K562 (cell line): ENCODE measurements at regions of chr15 and their contacts with region 1.

Region 1: GRCh38 chr15:90412356-90413194 is 24.5 kb downstream of the IQGAP1 start:
- DNase-seq: no peak
- ATAC-seq: peak; percentile 79
- H3K4me3 ChIP-seq: no peak overlapping the region
- H3K27ac ChIP-seq: no peak overlapping the region
- H3K4me1 ChIP-seq: peaks cover 0 to 23% of the 10 kb centered on the region in 2 experiments; a peak in 4 of 5 replicates
- H3K27me3 ChIP-seq: no peaks in the 10 kb centered on the region
- CTCF ChIP-seq: no peak
- EP300 ChIP-seq: no peak
- POLR2A ChIP-seq: no peak
- RAD21 ChIP-seq: no peak

Region 2: DNA sequence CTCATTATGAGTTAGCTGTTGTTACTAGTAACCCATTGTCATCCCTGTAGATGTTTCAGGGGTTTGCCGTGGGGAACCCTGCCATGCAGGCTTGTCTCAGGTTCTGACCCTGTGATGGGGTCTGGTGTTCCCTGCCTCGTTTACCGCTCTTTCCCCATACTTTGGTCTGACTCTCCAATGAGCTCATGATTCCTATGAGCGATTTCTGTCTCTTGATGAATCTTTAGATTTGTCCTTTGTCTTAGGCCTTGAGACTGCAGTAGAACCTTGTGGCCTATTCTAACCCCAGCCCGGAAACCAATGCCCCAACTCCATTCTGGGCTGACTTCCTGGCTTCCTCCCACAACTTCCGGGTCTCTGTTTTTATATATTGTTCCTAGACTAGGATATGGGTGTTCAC is 35.8 kb before region 1 on chr15:
- CTCF ChIA-PET with region 1: no interaction called
- POLR2A ChIA-PET with region 1: no interaction called
- in situ Hi-C with region 1: no loop called
- intact Hi-C with region 1: no loop called
- DNase-seq: no peak
- ATAC-seq: no peak
- H3K4me3 ChIP-seq: no peak overlapping the region
- H3K27ac ChIP-seq: no peak overlapping the region
- H3K4me1 ChIP-seq: no peaks in the 10 kb centered on the region
- H3K27me3 ChIP-seq: no peaks in the 10 kb centered on the region
- CTCF ChIP-seq: no peak
- EP300 ChIP-seq: no peak
- POLR2A ChIP-seq: no peak
- RAD21 ChIP-seq: no peak

Region 3: DNA sequence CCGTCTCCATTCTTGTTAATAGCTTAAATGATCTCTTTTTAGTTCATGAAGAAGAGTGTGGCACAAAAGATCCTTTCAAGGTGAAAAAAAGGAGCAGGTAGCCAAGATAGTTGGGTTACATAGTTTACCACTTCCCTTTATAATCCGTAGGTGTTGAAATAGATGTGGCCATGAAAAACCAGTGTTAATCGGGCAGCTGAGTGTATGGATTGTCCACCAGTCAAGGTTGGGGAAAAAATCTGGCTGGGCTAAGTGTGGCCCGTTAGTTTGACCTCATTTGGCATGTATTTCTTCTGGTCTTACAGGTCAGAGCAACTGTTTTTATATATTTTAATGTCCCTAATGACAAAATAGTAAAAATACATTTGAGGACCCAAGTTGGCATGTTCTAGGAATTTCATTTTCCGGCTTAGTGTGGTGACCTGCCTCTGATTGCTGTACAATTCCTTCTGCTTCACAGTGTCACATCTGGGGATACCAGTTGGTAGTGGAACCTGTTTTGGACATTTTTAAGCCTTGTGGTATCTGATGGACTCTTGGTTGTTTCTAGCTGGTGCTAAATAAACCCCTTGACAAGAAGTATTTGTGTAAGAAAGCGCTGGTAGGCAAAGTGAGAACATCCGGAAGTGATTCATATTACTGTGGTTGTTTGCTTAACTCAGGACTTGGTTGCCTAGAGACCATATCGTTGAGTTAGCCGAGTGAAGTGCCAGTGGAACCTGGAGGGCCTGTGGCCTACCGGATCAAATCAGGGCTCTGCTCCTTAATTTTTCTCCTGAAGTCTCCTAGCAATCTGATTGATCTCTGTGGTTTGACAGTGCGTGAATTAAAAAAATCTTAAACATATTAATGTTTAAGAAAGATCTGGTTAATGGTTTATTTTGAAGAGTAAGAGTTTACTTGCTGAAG is 11.9 kb before region 1 on chr15:
- CTCF ChIA-PET with region 1: no interaction called
- POLR2A ChIA-PET with region 1: interaction called, 19 read pairs
- in situ Hi-C with region 1: no loop called
- intact Hi-C with region 1: no loop called
- DNase-seq: peak; percentile 71 to 88 (median 79)
- ATAC-seq: peak; percentile 97
- H3K4me3 ChIP-seq: no peak overlapping the region
- H3K27ac ChIP-seq: peak overlapping the region; percentile 82
- H3K4me1 ChIP-seq: peaks cover 0 to 29% of the 10 kb centered on the region in 2 experiments; a peak in 3 of 5 replicates
- H3K27me3 ChIP-seq: no peaks in the 10 kb centered on the region
- CTCF ChIP-seq: no peak
- EP300 ChIP-seq: peak; percentile 51
- POLR2A ChIP-seq: no peak
- RAD21 ChIP-seq: no peak

Region 4: DNA sequence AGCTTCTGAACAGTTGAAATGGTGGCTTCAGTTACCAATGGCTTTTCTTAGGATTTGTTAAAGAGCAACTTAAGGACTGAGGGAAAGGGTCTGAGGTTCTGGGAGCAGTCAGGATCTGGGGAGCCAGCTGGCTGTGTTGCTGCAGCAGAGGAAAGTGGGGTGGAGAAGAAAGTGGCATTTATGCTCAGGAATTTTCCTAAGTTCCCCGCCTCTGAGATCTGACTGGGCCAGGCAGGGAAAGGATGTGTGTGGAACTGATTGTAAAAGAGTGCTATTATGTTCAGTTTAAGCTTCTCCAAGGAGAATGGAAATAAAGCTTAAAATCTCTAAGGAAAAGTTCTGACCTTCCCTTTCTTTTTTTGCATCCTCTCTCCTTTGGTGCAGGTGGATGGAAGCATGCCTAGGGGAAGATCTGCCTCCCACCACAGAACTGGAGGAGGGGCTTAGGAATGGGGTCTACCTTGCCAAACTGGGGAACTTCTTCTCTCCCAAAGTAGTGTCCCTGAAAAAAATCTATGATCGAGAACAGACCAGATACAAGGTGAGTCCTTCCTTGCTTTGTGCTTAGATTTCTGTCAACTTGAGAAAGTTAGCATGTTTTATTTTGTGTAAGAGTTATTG is 13.3 kb after region 1 on chr15:
- CTCF ChIA-PET with region 1: no interaction called
- POLR2A ChIA-PET with region 1: interaction called, 15 read pairs
- in situ Hi-C with region 1: no loop called
- intact Hi-C with region 1: no loop called
- DNase-seq: no peak
- ATAC-seq: no peak
- H3K4me3 ChIP-seq: no peak overlapping the region
- H3K27ac ChIP-seq: no peak overlapping the region
- H3K4me1 ChIP-seq: no peaks in the 10 kb centered on the region; a peak in 1 of 5 replicates
- H3K27me3 ChIP-seq: no peaks in the 10 kb centered on the region
- CTCF ChIP-seq: no peak
- EP300 ChIP-seq: no peak
- POLR2A ChIP-seq: no peak
- RAD21 ChIP-seq: no peak